ENCODE measurements at regions of chrX and their contacts with region 1.

Region 1: GRCh38 chrX:107374132-107374531 is 75.3 kb upstream of the FRMPD3 start:
- DNase-seq: no peak
- ATAC-seq: no peak
- H3K4me3 ChIP-seq: no peak overlapping the region
- H3K27ac ChIP-seq: no peak overlapping the region
- H3K4me1 ChIP-seq: no peaks in the 10 kb centered on the region
- H3K27me3 ChIP-seq: no peaks in the 10 kb centered on the region
- CTCF ChIP-seq: no peak

Region 2: DNA sequence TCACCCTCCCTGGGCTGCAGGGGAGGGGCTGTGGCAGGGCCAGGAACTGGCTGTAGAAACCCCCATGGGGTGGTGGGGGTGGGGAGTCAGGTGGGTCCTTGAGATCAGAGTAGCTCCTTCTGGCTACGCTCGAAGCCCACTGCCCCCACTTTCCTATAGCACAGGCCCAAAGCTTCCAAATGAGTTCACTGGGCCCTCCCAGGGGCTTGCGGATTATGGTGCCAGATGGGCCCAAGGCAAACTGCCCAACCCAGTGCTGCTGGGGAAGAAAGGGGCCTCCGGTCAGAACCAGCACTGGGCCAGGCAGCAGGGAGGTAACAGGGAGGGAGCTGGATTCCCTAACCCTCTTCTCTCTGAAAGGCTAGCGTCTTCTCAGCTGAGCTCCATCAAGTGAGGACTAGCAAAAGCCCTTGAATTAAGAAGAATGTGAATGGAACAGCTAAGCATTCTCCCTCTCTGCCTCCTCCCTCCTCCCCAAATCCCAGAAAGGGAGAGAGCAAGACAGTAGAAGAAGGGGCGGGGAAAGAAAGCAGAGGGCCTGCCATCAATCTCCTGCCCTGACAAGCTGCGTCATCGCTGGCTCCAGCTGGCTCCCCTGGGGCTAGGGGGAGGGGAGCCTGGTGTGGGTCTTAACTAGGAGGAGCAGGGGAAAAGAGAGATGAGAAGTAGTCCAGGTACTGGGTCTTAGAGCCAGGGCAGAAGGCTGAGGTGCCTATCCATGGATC is 110.0 kb after region 1 on chrX:
- CTCF ChIA-PET with region 1: interaction called, 10 read pairs
- POLR2A ChIA-PET with region 1: no interaction called
- in situ Hi-C with region 1: no loop called
- intact Hi-C with region 1: no loop called
- DNase-seq: no peak
- ATAC-seq: no peak
- H3K4me3 ChIP-seq: no peak overlapping the region
- H3K27ac ChIP-seq: no peak overlapping the region
- H3K4me1 ChIP-seq: no peaks in the 10 kb centered on the region
- H3K27me3 ChIP-seq: peaks cover 3% of the 10 kb centered on the region
- CTCF ChIP-seq: no peak

Region 3: GRCh38 chrX:107602694-107603239 is 228.6 kb after region 1 on chrX:
- CTCF ChIA-PET with region 1: no interaction called
- POLR2A ChIA-PET with region 1: no interaction called
- in situ Hi-C with region 1: no loop called
- intact Hi-C with region 1: no loop called
- DNase-seq: no peak
- ATAC-seq: no peak
- H3K4me3 ChIP-seq: no peak overlapping the region
- H3K27ac ChIP-seq: no peak overlapping the region
- H3K4me1 ChIP-seq: no peaks in the 10 kb centered on the region
- H3K27me3 ChIP-seq: no peaks in the 10 kb centered on the region
- CTCF ChIP-seq: no peak